OCI-LY7 (cell line): ENCODE measurements at regions of chr9 and their contacts with region 1.

Region 1: GRCh38 chr9:101311758-101312420 is 72.9 kb downstream of the BAAT start:
- DNase-seq: peak; percentile 85
- H3K4me3 ChIP-seq: no peak overlapping the region
- H3K27ac ChIP-seq: no peak overlapping the region
- H3K4me1 ChIP-seq: no peaks in the 10 kb centered on the region
- CTCF ChIP-seq: peak; percentile 89

Region 2: GRCh38 chr9:100714372-100715099 is 597.4 kb before region 1 on chr9:
- CTCF ChIA-PET with region 1: no interaction called
- POLR2A ChIA-PET with region 1: no interaction called
- intact Hi-C with region 1: loop called (anchors 5 kb)
- DNase-seq: peak; percentile 49
- H3K4me3 ChIP-seq: no peak overlapping the region
- H3K27ac ChIP-seq: no peak overlapping the region
- H3K4me1 ChIP-seq: no peaks in the 10 kb centered on the region
- CTCF ChIP-seq: peak; percentile 97

Region 3: GRCh38 chr9:101119206-101119819 is 192.6 kb before region 1 on chr9:
- CTCF ChIA-PET with region 1: interaction called, 3 read pairs
- POLR2A ChIA-PET with region 1: no interaction called
- intact Hi-C with region 1: loop called (anchors 2 kb)
- DNase-seq: peak; percentile 30
- H3K4me3 ChIP-seq: no peak overlapping the region
- H3K27ac ChIP-seq: no peak overlapping the region
- H3K4me1 ChIP-seq: no peaks in the 10 kb centered on the region
- CTCF ChIP-seq: peak; percentile 70